ENCODE measurements at regions of chr6 and their contacts with region 1.

Region 1: GRCh38 chr6:52284460-52285176 is at the start of gene MCM3:
- DNase-seq: peak; percentile 92

Region 2: DNA sequence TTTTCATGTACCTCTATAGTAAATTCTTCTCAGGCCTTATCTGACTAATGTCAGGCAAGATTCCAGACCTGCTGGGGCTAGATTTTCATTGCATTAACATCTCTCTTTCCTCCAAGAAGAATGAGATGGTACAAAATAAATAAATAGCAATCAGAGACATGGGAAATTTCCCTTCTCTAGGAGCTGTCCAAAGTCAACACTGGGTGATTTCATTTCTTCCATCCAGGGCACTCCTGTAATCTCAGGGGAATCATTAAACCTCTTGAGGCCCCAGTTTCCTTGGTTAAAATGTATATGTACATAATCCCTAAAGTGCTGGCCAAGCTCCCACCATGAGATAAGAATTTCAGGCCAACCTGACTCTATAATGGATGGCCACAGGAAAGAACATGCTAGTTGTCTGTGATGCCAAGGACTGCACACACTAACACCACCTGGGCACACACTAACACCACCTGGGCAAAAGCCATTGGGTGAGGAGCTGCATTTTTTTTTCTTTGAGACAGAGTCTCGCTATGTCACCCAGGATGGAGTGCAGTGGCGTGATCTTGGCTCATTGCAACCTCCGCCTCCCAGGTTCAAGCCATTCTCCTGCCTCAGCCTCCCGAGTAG is 41.2 kb before region 1 on chr6:
- CTCF ChIA-PET with region 1: no interaction called
- POLR2A ChIA-PET with region 1: interaction called, 12 read pairs
- DNase-seq: peak; percentile 39

Region 3: DNA sequence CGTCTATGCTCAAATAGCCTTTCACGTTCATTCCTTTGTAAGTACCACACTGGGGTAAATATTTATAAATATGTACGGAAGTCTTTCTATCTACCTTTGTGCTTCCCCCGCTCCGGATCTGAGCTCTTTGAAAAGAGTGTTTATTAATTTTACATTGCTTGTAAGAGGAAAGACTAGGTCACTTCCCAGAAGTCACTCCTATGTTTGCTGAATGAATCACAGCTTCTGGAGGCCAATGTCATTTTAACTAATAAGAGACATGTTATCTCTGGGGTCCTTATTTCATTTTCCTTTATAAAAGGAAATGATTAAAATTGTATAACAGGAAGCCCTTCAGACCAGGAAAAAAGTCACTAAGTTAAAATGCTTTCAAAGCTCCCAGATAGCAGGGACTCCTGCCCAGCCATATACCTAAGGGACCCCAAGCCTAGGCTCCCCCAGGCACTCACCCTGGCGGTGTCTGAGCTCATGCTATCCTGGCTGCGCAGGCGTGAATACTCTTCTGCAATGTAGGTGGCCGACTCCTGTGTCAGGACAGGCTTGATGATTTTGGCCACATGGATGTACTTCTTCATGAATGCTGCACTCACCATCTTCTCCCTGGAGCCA is 12.7 kb before region 1 on chr6:
- CTCF ChIA-PET with region 1: interaction called, 5 read pairs
- POLR2A ChIA-PET with region 1: interaction called, 44 read pairs
- DNase-seq: no peak

Region 4: GRCh38 chr6:52389626-52390360 is 105.2 kb after region 1 on chr6:
- CTCF ChIA-PET with region 1: interaction called, 9 read pairs
- POLR2A ChIA-PET with region 1: interaction called, 17 read pairs
- DNase-seq: no peak

Region 5: DNA sequence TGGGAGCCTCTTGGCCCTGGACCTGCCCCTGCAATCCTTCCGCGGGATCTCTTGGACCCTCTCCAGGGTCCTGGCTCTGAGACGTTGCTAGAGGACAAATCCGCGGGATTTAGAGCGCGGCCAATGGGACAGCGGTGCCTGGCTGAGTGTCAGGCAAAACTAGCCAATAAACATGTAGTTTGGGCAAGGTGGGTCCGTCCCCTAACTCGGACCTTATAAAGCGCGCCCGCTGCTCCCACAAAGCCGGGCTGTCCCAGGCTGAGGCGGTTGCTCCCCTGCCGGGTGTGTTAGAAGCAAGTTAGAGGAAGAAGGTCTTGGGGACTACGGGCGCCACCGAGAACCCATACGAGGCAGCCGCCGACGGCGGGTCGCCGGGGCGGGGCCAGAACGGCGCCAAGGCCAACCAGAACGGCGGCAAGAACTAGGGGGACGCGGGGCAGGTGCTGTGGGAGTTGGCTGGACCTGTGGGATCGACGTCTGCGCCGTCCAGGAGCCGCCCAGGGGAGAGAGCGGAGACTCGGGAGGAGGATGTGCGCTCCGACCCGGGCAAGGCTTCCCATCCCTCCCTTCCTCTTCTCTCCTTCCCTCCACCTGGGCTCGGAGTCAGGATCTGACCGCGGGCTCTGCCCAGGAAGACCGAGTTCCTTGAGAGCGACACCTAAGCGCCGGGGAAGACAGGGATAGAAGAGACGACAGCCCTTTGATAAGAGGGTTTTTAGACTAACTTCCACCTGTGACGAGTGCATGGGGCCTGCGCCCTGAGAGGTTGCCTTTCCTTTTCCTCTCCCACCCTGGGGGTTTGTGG is 379.8 kb after region 1 on chr6:
- CTCF ChIA-PET with region 1: no interaction called
- POLR2A ChIA-PET with region 1: interaction called, 10 read pairs
- DNase-seq: peak; percentile 92

Measured in HEK293T (cell line).